AG04450 (cell line): ENCODE measurements at regions of chr11 and their contacts with region 1.

Region 1: GRCh38 chr11:72091005-72091691 is 10.5 kb downstream of the LRRC51 start:
- DNase-seq: peak; percentile 20
- H3K4me3 ChIP-seq: no peak overlapping the region
- H3K27ac ChIP-seq: no peak overlapping the region
- H3K27me3 ChIP-seq: no peaks in the 10 kb centered on the region
- CTCF ChIP-seq: peak; percentile 90

Region 2: GRCh38 chr11:71977743-71978418 is 113.3 kb before region 1 on chr11:
- CTCF ChIA-PET with region 1: interaction called, 40 read pairs
- POLR2A ChIA-PET with region 1: no interaction called
- DNase-seq: no peak
- H3K4me3 ChIP-seq: no peak overlapping the region
- H3K27ac ChIP-seq: no peak overlapping the region
- H3K27me3 ChIP-seq: no peaks in the 10 kb centered on the region
- CTCF ChIP-seq: peak; percentile 72

Region 3: DNA sequence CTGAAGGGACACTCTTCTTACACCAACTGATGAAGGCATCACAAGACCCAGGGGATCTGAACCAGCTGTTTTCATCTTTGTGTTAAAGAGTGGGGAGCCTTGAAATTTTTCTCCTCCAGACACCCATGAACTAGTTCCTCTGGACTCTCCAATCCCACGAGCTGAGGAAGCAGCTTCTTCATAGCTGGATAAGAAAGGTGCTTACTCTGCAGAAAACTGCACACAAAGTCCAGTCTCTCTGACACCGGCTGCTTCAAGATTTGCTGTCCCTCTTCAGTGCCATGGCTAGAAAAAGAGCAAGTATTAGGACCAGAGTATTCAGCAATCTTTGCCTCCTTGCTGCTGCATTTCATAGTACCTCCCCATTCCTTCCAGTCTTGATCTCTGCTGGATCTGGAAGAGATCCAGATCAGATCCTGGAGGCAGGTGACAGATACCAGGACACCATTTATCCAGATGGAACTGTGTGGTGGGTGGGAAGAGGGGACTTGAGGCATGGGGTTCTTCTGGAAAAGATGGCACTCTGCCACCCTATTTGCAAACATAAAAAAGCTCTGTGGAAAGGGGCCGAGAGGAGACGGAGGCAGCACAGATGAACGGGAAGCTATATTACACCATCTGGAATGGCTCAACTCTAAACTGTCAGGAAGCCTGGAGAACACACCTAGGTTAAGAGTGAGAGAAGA is 66.9 kb before region 1 on chr11:
- CTCF ChIA-PET with region 1: interaction called, 261 read pairs
- POLR2A ChIA-PET with region 1: interaction called, 4 read pairs
- DNase-seq: no peak
- H3K4me3 ChIP-seq: no peak overlapping the region
- H3K27ac ChIP-seq: no peak overlapping the region
- H3K27me3 ChIP-seq: no peaks in the 10 kb centered on the region
- CTCF ChIP-seq: no peak

Region 4: DNA sequence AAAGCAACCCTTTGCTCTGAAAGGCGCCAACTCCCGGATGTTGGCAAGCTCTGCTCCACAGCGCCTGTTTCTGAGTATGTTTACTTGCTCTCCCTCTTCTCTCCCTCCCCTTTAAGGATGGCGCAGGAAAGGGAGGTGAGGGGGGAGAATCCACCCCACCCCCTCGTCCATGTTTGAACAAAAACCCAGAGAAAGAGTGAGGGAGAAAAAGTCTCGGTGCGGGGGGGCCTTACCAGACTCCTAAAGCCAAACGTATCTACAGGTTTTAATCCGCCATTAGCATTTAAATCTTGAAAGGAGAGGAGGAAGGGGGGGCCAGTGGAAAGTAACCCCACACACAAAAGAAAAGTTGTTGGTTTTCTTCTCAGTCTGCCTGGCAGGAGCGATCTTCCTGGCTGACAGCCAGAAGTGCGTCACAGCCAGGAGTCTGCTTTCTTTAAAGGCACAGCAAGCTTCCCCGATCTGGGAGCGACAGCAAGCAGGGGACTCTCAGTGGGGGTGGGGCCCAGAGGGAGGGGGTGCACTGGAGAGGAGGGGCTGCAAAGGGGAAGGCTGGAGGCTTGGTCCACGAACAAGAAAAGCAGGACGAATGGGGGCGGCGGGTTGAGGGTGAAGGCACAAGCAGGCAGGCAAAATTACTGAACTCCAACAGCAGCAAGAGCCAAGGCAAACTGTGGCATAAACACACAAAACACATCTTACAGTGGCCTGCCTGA is 50.3 kb before region 1 on chr11:
- CTCF ChIA-PET with region 1: interaction called, 25 read pairs
- POLR2A ChIA-PET with region 1: interaction called, 3 read pairs
- DNase-seq: peak; percentile 89
- H3K4me3 ChIP-seq: peak overlapping the region; percentile 88
- H3K27ac ChIP-seq: peak overlapping the region; percentile 99
- H3K27me3 ChIP-seq: no peaks in the 10 kb centered on the region
- CTCF ChIP-seq: no peak

Region 5: GRCh38 chr11:72080256-72080974 is 10.7 kb before region 1 on chr11 and contains the starts of genes LRRC51 and NUMA1:
- CTCF ChIA-PET with region 1: interaction called, 21 read pairs
- POLR2A ChIA-PET with region 1: no interaction called
- DNase-seq: peak; percentile 100
- H3K4me3 ChIP-seq: peak within 1 kb of the TSS; percentile 73
- H3K27ac ChIP-seq: peak within 1 kb of the TSS; percentile 83
- H3K27me3 ChIP-seq: no peaks in the 10 kb centered on the region
- CTCF ChIP-seq: no peak
- polyA plus RNA-seq, gene LRRC51: 7.8 and 8.6 TPM in 2 replicates
- polyA plus RNA-seq, gene NUMA1: 79.5 and 90.7 TPM in 2 replicates

Region 6: GRCh38 chr11:72141066-72141465 is 49.9 kb after region 1 on chr11:
- CTCF ChIA-PET with region 1: interaction called, 10 read pairs
- POLR2A ChIA-PET with region 1: no interaction called
- DNase-seq: peak; percentile 69
- H3K4me3 ChIP-seq: no peak overlapping the region
- H3K27ac ChIP-seq: peak overlapping the region; percentile 80
- H3K27me3 ChIP-seq: no peaks in the 10 kb centered on the region
- CTCF ChIP-seq: no peak

Region 7: DNA sequence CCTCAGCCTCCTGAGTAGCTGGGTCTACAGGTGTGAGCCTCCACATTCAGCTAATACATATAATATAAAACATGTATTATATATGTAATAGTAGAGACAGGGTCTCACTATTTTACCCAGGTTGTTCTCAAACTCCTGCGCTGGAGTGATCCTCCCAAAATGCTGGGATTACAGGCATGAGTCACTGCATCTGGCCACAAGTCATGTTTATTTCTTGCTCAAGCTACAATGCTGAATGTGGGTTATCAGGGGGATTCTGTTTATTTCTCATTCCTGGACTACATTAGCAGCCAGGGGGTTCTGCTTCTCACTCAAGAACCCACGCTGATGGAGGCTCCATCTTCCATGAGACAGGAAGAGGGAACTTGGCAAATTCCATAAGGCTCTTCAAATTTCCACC is 69.2 kb after region 1 on chr11:
- CTCF ChIA-PET with region 1: no interaction called
- POLR2A ChIA-PET with region 1: no interaction called
- DNase-seq: no peak
- H3K4me3 ChIP-seq: no peak overlapping the region
- H3K27ac ChIP-seq: no peak overlapping the region
- H3K27me3 ChIP-seq: no peaks in the 10 kb centered on the region
- CTCF ChIP-seq: no peak